Activated CD4-positive, alpha-beta memory T cell treated with anti-CD3 and anti-CD28 coated beads for 36 hours (primary cell): ENCODE measurements at regions of chr2 and their contacts with region 1.

Region 1: DNA sequence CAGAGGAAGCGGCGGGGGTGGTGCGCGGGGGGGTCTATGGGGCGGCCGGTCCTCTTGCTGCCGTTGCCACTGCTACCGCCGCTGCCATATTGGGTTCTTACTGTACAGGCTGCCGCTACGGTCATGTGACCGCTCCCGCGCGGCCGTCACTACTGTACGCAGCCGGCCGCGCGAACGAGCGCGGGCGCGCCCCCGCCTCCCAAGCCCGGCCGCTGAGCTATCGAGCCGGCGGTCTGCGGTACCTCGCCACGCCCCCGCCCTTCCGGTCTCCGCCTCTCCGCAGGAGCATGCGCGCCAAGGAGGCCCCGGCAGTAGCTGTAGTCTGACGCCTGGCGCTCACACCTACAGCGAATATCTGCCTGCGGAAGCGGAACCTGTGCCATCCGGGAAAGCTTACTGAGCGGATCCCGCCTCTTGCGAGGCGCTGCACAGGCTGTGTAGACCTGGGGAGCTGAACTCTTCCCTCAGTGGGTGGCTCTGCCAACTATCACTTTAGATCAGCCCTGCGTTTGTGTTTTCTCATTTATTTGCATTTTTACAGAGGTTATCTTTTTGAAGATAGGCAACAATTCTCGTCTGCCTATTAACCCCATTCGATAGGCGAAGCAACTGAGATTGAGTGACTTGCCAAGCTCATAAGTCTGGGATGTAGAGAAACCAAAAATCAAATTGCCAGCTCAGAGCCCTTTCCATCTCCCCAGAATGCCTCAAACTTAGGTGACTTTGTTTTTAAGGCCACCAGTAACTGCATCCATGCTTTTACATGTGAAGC is at the start of gene ASXL2:
- DNase-seq: peak; percentile 99
- H3K4me3 Mint-ChIP-seq: peak within 1 kb of the TSS; percentile 93
- H3K27ac Mint-ChIP-seq: peak within 1 kb of the TSS; percentile 94
- H3K4me1 Mint-ChIP-seq: peaks cover 39% of the 10 kb centered on the region
- H3K27me3 Mint-ChIP-seq: no peaks in the 10 kb centered on the region
- total RNA-seq, gene ASXL2: 37.8 to 38.7 TPM

Region 2: GRCh38 chr2:25673300-25674076 is 205.1 kb before region 1 on chr2 and contains the start of gene DTNB:
- CTCF ChIA-PET with region 1: interaction called, 3 read pairs
- POLR2A ChIA-PET with region 1: no interaction called
- intact Hi-C with region 1: loop called (anchors 2 kb)
- DNase-seq: peak; percentile 85
- H3K4me3 Mint-ChIP-seq: peak within 1 kb of the TSS; percentile 80
- H3K27ac Mint-ChIP-seq: peak within 1 kb of the TSS; percentile 62
- H3K4me1 Mint-ChIP-seq: peaks cover 27% of the 10 kb centered on the region
- H3K27me3 Mint-ChIP-seq: no peaks in the 10 kb centered on the region
- total RNA-seq, gene DTNB: 20.8 to 25.1 TPM

Region 3: DNA sequence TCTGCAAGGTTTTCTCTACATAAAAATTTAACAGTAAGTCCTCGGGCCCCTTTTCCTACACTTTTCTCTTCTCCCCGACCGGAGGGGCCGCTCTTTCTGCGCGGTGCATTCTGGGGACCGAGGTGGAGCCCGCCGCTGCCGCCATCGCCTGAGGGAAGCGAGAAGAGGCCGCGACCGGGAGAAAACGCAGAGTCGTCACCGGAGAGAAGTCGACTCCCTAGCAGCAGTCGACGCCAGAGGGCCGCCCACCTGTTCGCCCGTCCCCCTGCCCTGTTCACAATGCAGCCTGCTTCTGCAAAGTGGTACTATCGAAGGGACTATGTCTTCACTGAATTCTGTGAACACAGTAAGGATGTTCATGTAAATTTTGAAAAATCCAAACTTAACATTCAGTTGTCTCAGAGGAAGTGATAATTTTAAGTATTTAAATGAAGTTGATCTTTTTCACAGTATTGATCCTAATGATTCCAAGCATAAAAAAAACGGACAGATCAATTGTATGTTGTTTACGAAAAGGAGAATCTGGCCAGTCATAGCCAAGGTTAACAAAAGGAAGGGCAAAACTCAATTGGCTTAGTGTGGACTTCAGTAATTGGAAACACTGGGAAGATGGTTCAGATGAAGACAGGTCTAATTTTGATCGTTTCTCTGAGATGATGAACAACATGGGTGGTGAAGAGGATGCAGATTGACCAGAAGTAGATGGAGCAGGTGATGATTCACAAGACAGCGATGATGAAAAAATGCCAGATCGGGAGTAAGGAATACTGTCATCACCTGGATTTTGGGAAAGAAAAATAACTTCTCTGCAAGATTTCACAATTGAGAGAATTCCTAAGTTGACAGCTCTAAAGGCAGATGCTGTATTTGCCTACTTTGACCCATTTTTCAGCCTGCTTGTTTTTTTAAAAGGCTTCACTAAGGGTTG is 56.1 kb before region 1 on chr2:
- CTCF ChIA-PET with region 1: no interaction called
- POLR2A ChIA-PET with region 1: interaction called, 4 read pairs
- intact Hi-C with region 1: loop called (anchors 2 kb)
- DNase-seq: peak; percentile 77
- H3K4me3 Mint-ChIP-seq: peak overlapping the region; percentile 68
- H3K27ac Mint-ChIP-seq: peak overlapping the region; percentile 51
- H3K4me1 Mint-ChIP-seq: peaks cover 61% of the 10 kb centered on the region
- H3K27me3 Mint-ChIP-seq: peaks cover 1% of the 10 kb centered on the region

Region 4: DNA sequence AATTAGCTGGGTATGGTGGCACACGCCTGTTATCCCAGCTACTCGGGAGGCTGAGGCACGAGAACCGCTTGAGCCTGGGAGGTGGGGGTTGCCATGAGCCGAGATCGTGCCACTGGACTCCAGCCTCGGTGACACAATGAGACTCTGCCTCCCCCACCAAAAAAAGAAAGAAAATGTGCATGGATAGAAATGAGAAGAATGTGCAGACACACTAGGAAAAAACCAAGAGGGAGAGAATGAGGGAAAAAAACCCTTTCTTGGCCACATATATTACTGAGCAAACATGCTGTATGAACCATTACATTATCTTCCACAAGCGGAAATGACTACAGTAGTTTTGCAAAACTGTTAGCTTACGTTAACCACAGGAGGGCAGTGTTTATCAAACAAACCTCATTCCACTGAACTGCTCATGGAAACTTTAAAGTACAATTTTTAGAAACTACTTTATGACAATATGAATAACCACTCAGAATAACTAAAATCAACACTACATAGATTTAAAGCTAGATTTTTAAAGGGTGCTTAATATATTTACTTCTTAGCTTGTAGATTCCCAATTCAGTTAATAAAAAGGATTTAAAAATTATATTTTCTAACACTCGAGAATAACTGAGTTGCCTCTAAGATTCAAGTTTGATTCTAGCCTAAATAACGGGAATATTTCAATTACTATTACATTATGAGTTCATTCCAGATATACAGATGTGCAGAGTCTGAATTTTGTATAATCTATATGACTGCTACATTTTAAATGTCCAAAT is 26.6 kb before region 1 on chr2:
- CTCF ChIA-PET with region 1: interaction called, 25 read pairs
- POLR2A ChIA-PET with region 1: interaction called, 35 read pairs
- intact Hi-C with region 1: loop called (anchors 1 kb)
- DNase-seq: peak; percentile 38
- H3K4me3 Mint-ChIP-seq: peak overlapping the region; percentile 53
- H3K27ac Mint-ChIP-seq: peak overlapping the region; percentile 78
- H3K4me1 Mint-ChIP-seq: peaks cover 51% of the 10 kb centered on the region
- H3K27me3 Mint-ChIP-seq: no peaks in the 10 kb centered on the region

Region 5: DNA sequence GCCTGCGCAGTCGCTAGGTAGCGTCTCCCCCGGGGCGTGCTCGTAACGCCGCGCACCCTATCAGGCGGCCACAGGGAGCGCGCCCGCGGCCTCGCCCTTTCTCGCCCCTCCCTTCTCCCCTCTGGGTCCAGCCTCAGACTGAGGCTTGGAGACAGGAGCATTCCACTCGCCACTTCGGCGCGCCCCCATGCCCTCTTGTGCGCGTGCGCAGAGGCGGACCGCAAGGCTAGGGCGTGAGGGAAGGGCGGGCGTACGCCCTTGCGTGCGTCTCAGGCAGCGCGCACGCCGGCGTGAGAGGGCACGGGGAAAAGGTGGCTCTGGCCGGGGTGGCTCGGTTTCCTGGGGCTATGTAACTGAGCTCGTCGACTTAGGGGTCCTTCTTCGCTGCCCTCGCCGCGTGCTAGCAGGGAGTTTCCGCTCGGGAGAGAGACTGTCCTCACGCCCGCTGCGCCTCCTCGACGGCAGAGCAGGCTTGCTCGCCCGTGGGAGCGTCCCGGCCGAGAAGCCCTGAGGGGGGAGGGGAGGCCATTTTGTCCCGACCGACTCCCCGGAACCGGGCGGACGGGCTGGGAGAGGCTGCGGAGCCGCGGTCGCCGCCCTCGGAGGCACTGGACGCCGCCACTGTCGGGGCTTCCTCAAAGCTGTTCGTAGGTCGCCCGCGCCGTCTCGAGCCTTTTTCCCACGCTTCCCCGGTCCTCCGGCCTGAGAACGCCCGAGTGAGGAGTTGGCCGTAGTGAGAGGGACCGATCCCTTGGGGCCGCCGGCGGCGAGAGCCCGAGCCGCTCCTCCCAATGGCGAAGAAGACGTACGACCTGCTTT is 155.5 kb after region 1 on chr2 and contains the start of gene RAB10:
- CTCF ChIA-PET with region 1: no interaction called
- POLR2A ChIA-PET with region 1: interaction called, 8 read pairs
- intact Hi-C with region 1: loop called (anchors 1 kb)
- DNase-seq: peak; percentile 100
- H3K4me3 Mint-ChIP-seq: peak within 1 kb of the TSS; percentile 96
- H3K27ac Mint-ChIP-seq: peak within 1 kb of the TSS; percentile 91
- H3K4me1 Mint-ChIP-seq: peaks cover 24% of the 10 kb centered on the region
- H3K27me3 Mint-ChIP-seq: no peaks in the 10 kb centered on the region
- total RNA-seq, gene RAB10: 110 to 119 TPM

Region 6: DNA sequence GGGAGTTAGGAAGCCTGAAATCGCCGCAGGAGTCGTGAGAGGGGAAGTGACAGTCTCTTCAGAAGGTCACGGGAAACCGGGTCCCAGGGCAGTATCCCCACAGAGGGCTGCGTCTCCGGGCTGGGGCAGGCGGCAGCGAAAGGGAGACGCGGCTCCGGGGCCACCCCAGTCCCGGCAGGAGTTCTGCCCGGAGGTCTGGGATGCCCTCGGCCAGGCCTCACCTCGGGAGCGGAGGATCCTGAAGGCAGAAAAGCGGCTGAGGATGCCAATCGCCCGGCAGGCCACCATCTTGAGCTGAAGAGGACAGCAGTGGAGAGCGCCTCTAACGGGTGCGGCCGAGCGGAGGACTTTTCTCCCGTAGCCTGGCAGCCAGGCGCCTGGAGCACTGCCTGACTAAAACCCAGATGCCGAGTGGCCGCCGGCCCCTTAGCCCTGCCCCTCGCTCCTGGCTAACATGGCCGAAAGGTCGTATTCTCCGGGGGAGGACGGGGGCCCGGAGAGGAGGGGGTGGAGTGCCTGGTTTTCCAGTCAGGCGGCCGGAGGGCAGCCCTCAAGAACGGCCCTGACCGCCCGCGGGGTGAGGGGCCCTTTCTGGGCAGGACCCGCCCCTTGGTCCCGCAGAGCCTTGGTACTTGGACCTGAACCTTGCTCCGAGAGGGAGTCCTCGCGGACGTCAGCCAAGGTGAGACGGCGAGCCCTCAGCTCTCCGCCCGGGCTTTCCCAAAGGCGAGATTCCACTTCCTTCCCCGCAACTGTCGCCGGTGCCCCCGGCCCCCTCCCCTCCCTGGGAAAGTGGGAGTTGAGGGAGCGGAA is 366.0 kb after region 1 on chr2 and contains the starts of genes HADHA and HADHB:
- CTCF ChIA-PET with region 1: interaction called, 3 read pairs
- POLR2A ChIA-PET with region 1: no interaction called
- intact Hi-C with region 1: loop called (anchors 2 kb)
- DNase-seq: peak; percentile 90
- H3K4me3 Mint-ChIP-seq: peak within 1 kb of the TSS; percentile 98
- H3K27ac Mint-ChIP-seq: peak within 1 kb of the TSS; percentile 95
- H3K4me1 Mint-ChIP-seq: peaks cover 48% of the 10 kb centered on the region
- H3K27me3 Mint-ChIP-seq: no peaks in the 10 kb centered on the region
- total RNA-seq, gene HADHA: 129 to 130 TPM
- total RNA-seq, gene HADHB: 73.8 to 78.1 TPM

Region 7: GRCh38 chr2:27042159-27042661 is 1163.7 kb after region 1 on chr2:
- CTCF ChIA-PET with region 1: no interaction called
- POLR2A ChIA-PET with region 1: no interaction called
- intact Hi-C with region 1: no loop called
- DNase-seq: no peak
- H3K4me3 Mint-ChIP-seq: no peak overlapping the region
- H3K27ac Mint-ChIP-seq: peak overlapping the region; percentile 12
- H3K4me1 Mint-ChIP-seq: peaks cover 3% of the 10 kb centered on the region
- H3K27me3 Mint-ChIP-seq: no peaks in the 10 kb centered on the region